HepG2 (cell line): ENCODE measurements at regions of chr20 and their contacts with region 1.

Region 1: GRCh38 chr20:17854307-17854903 is 114.2 kb downstream of the SNX5 start:
- DNase-seq: peak; percentile 82
- ATAC-seq: peak; percentile 58
- H3K4me3 ChIP-seq: peak overlapping the region in 2 of 3 experiments; percentile 6 to 38; a peak in 2 of 6 replicates
- H3K27ac ChIP-seq: peak overlapping the region; percentile 21
- H3K4me1 ChIP-seq: peaks cover 76% of the 10 kb centered on the region
- H3K27me3 ChIP-seq: no peaks in the 10 kb centered on the region
- CTCF ChIP-seq: no peak
- EP300 ChIP-seq: 0 out of 4 replicates have a peak, but pooled peaks of 1 of the 2 experiments have one; percentile 21
- POLR2A ChIP-seq: no peak
- RAD21 ChIP-seq: peak; percentile 52

Region 2: DNA sequence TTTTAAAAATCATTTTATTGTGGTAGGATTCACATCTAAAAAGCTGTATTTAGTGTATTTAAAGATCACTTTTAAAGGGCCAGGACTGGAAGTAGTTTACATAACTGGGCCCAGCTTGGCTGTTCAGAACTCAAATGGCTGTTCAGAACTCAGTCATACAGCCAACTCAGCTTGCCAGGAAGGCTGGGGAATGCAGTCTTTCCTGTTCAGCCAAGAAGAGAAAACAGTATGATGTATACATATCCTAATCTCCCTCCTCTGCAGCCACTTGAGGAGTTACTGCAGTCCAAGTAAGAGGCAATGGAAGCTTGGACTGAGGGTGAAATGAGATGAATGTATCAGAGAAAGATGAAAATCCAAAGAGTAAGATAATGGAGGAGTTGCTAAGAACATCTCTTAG is 260.0 kb before region 1 on chr20:
- CTCF ChIA-PET with region 1: no interaction called
- POLR2A ChIA-PET with region 1: no interaction called
- in situ Hi-C with region 1: no loop called
- intact Hi-C with region 1: no loop called
- DNase-seq: no peak
- ATAC-seq: no peak
- H3K4me3 ChIP-seq: no peak overlapping the region
- H3K27ac ChIP-seq: no peak overlapping the region
- H3K4me1 ChIP-seq: no peaks in the 10 kb centered on the region
- H3K27me3 ChIP-seq: no peaks in the 10 kb centered on the region
- CTCF ChIP-seq: no peak
- EP300 ChIP-seq: no peak
- POLR2A ChIP-seq: no peak
- RAD21 ChIP-seq: no peak

Region 3: GRCh38 chr20:17721802-17722486 is 132.5 kb before region 1 on chr20:
- CTCF ChIA-PET with region 1: no interaction called
- POLR2A ChIA-PET with region 1: interaction called, 18 read pairs
- in situ Hi-C with region 1: no loop called
- intact Hi-C with region 1: loop called (anchors 1 kb)
- DNase-seq: peak; percentile 99
- ATAC-seq: peak; percentile 91
- H3K4me3 ChIP-seq: peak overlapping the region in 1 of 3 experiments; percentile 8; a peak in 2 of 6 replicates
- H3K27ac ChIP-seq: peak overlapping the region; percentile 55
- H3K4me1 ChIP-seq: peaks cover 44% of the 10 kb centered on the region
- H3K27me3 ChIP-seq: peaks cover 4 to 65% of the 10 kb centered on the region in 2 experiments; a peak in 4 of 5 replicates
- CTCF ChIP-seq: peak; percentile 35; the same call in 1 of the 2 replicates
- EP300 ChIP-seq: peak; percentile 99; a peak in 3 of 4 replicates
- POLR2A ChIP-seq: no peak
- RAD21 ChIP-seq: peak; percentile 59; the same call in 1 of the 2 replicates

Region 4: GRCh38 chr20:17825960-17826843 is 28.2 kb before region 1 on chr20:
- CTCF ChIA-PET with region 1: no interaction called
- POLR2A ChIA-PET with region 1: interaction called, 60 read pairs
- in situ Hi-C with region 1: no loop called
- intact Hi-C with region 1: loop called (anchors 2 kb)
- DNase-seq: peak; percentile 44
- ATAC-seq: peak; percentile 10; the same call in 1 of the 3 replicates
- H3K4me3 ChIP-seq: no peak overlapping the region
- H3K27ac ChIP-seq: no peak overlapping the region
- H3K4me1 ChIP-seq: peaks cover 88% of the 10 kb centered on the region
- H3K27me3 ChIP-seq: no peaks in the 10 kb centered on the region; a peak in 1 of 5 replicates
- CTCF ChIP-seq: no peak
- EP300 ChIP-seq: no peak
- POLR2A ChIP-seq: no peak
- RAD21 ChIP-seq: no peak

Region 5: DNA sequence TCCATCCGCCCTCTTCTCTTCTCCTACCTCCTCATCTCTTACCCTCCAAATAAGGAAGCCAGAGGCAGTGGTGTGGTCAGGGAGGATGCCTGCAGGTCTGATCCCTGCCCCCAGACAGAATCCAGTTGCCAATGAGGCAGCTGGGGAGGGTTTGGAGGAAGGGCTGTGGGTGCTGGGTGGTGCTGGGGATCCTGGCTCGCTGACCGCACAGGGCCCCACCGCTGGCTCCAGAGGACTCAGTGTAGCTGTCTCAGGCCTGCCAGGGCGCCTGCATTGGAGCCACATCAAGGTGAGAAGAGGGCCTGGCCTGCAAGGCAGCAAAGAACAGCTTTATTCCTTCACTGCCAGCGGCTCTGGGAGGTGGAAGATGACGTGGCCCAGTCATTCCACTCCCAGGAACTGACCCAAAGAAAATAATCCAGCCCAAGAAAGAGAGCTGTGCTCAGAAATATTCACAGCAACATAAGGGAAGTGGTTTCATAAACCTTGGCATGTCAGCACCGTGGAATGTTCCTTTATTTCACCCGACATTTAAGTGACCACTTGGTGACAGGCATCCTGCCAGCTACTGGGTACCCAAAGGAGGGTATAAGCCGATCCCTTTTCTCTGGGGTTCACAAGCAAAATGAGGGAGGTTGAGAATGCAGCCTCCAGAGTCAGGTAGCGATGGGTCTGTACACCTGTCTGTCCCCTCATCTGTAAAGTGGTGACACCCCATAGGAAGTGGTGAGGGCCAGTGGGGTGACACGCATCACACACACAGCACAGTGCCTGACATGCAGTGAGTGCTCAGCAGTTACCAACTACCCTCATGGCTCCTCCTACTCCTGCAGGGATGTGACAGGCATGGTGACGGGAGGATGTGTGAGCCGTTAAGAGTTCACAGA is 10.9 kb before region 1 on chr20:
- CTCF ChIA-PET with region 1: no interaction called
- POLR2A ChIA-PET with region 1: interaction called, 164 read pairs
- in situ Hi-C with region 1: no loop called
- intact Hi-C with region 1: no loop called
- DNase-seq: no peak
- ATAC-seq: peak; percentile 69
- H3K4me3 ChIP-seq: peak overlapping the region in 1 of 3 experiments; percentile 42; a peak in 1 of 6 replicates
- H3K27ac ChIP-seq: no peak overlapping the region
- H3K4me1 ChIP-seq: peaks cover 71% of the 10 kb centered on the region
- H3K27me3 ChIP-seq: peaks cover 8 to 21% of the 10 kb centered on the region in 2 experiments; a peak in 3 of 5 replicates
- CTCF ChIP-seq: no peak
- EP300 ChIP-seq: no peak
- POLR2A ChIP-seq: no peak
- RAD21 ChIP-seq: no peak

Region 6: DNA sequence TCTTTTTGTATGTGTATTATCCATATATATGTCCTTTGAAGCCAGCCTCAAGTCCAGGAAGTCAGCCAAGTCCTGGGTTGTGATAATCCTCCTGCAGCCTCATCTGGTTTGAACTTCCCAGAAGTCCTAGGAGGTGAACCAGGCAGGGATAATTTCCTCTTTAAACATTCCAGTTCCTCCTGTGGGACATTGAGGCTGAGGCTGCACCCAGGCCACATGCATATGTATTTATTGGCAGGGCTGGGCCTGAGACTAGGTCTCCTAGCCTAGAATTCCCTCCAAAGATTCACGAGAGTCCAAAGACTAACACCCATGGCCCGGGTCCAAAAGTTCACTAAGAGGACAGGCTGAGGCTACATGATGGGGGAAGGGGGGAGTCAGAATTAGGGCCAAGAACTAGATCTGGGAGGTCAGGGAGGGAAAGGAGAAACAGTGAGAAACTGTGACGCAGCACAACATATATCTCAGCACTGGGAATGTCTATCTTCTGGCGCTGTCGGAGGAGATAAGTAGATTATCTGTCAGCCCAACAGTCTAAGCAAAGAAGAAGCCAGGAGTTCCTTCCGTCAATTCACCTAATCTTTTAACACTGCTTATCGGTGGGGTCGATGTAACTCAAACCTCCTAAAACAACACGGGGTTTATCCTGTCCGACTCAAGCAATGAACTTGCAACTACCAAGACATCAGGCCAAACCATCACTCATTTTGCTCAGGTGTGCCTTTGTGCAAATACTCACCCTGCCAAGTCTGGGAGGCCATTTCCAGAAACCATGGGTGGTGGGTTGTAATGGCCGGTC is 70.9 kb after region 1 on chr20:
- CTCF ChIA-PET with region 1: no interaction called
- POLR2A ChIA-PET with region 1: no interaction called
- in situ Hi-C with region 1: no loop called
- intact Hi-C with region 1: no loop called
- DNase-seq: no peak
- ATAC-seq: peak; percentile 29
- H3K4me3 ChIP-seq: 0 out of 6 replicates have a peak overlapping the region, but pooled peaks of 1 of the 3 experiments have one; percentile 13
- H3K27ac ChIP-seq: no peak overlapping the region
- H3K4me1 ChIP-seq: peaks cover 32% of the 10 kb centered on the region
- H3K27me3 ChIP-seq: peaks cover 8 to 36% of the 10 kb centered on the region in 2 experiments; a peak in 3 of 5 replicates
- CTCF ChIP-seq: no peak
- EP300 ChIP-seq: no peak
- POLR2A ChIP-seq: no peak
- RAD21 ChIP-seq: no peak

Region 7: DNA sequence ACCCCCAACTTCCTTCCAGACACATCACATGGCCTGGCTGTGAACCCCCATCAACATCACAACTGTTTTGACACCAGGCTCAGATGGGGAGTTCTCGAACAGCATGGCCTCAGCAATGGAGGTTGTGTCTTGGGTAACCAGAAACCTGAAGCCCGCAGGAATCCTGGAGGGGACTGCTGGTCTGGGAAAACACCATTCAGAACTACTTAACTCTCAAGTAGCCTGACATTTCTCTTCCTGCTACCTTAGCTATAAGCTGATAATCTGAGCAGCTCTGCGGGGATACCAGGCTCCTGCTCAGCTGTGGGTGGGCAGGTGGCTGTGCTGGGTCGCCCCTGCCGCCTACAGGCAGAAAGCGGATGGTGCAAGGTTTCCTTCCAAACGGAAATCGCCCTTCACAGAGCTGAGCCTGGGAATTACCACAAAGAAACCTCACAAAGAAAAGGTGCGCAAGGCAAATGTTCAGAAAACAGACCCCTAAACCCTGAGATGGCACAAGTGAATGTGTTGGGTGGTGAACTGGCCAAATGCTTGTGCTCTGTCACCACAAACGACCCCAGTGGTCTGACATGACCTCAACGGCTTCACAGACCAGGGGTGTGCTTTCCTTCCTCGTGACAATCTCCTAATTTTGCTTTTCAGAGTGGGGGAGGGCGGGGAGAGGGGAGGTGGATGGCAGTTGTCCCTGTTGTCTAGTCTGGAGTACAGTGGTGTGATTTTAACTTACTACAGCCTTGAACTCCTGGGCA is 84.6 kb after region 1 on chr20:
- CTCF ChIA-PET with region 1: no interaction called
- POLR2A ChIA-PET with region 1: interaction called, 13 read pairs
- in situ Hi-C with region 1: no loop called
- intact Hi-C with region 1: no loop called
- DNase-seq: peak; percentile 76
- ATAC-seq: peak; percentile 76
- H3K4me3 ChIP-seq: peak overlapping the region; percentile 5 to 62 (median 32); a peak in 3 of 6 replicates
- H3K27ac ChIP-seq: peak overlapping the region; percentile 43
- H3K4me1 ChIP-seq: peaks cover 47% of the 10 kb centered on the region
- H3K27me3 ChIP-seq: peaks cover 6 to 22% of the 10 kb centered on the region in 2 experiments; a peak in 4 of 5 replicates
- CTCF ChIP-seq: peak; percentile 99
- EP300 ChIP-seq: no peak
- POLR2A ChIP-seq: peak in 1 of 2 experiments; percentile 44; a peak in 2 of 4 replicates
- RAD21 ChIP-seq: peak; percentile 99

Region 8: DNA sequence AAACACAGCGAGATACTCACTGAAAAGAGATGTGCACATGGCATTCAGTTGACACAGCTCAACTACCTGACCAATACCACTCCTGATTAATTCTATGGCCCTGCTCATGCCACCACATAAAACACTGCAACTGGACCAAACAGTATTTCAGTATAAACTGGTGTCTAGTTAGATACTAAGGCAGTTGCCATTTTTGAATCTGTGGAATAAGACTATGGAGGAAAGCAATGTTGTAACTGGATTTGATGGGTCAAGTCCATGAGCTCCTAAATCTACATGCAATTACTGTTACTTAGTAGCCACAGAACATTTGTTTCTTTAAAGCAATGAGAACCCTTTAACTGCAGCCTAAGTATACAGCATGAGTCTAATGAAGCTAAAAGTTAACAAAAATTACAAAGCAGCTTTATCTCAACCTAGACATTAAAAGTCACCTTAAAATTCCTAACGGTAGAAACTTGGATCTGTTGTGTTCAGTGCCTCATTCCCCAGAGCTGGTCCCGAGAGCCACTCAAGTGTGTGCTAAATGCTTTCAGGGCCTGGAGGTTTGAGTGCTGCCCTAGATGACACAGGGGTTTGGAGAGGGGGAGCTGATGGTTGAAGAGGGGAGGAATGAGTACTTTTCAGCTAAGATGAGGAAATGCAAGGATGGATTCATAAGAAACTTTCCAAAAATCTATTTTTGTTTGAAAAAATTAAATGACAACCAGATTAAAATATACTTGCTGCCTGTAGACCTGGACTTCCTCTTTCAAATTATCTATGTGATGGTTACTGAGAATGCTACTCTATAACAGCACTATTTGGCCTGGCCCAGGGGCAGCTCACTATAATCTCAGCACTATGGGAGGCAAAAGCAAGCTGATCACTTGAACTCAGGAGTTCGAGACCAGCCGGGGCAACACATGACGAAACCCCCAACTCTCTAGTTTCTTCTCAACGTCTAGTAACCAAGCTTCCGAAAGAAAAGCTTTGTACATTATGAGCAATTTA is 98.6 kb after region 1 on chr20:
- CTCF ChIA-PET with region 1: no interaction called
- POLR2A ChIA-PET with region 1: no interaction called
- in situ Hi-C with region 1: no loop called
- intact Hi-C with region 1: no loop called
- DNase-seq: no peak
- ATAC-seq: peak; percentile 7; the same call in 1 of the 3 replicates
- H3K4me3 ChIP-seq: no peak overlapping the region
- H3K27ac ChIP-seq: no peak overlapping the region
- H3K4me1 ChIP-seq: peaks cover 57% of the 10 kb centered on the region
- H3K27me3 ChIP-seq: no peaks in the 10 kb centered on the region
- CTCF ChIP-seq: no peak
- EP300 ChIP-seq: no peak
- POLR2A ChIP-seq: peak in 1 of 2 experiments; percentile 12; a peak in 1 of 4 replicates
- RAD21 ChIP-seq: no peak